ENCODE measurements at regions of chr22 and their contacts with region 1.

Region 1: DNA sequence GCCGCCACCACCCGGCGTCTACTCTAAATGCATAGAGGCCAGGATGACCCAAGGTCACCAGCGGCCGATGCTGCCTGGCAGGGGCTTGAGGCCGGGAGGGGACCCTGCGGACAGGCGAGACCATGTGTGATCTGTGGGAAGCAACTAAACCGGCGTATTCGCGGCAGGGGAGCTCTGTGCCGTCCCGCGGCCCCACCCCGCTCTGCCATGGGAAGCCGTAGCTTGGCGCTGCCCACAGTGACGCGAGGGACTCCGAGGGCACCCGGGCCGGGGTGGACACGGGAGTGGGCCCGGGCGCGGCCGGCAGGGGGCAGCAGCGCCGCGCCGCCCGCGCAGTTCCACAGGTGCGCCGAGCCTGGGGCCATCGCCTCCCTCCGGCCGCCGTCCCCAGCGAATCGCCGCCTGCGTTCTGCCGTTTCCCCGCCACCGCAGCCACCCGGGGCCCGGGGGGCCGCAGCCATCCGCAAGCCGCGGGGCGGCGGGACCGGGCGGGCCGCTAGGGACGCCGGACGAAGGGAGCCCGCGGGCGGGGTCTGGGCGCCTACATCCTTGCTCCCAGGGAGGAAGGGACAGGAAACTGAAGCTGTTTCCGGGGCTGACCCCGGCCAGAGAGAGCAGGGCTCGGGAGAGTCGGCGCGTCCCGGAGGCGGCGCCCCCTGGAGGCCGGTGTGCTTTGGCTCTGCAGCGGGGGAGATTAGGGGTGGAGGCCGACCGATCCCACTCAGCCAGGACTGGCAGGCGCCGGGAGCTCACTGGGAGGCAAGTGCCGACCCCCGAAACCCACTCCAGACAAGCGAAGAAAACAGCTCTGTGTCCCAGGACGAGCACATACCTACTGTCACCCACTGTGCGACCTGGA is 12.5 kb upstream of the HDHD5 start:
- DNase-seq: peak; percentile 94
- CTCF ChIP-seq: peak; percentile 91

Region 2: DNA sequence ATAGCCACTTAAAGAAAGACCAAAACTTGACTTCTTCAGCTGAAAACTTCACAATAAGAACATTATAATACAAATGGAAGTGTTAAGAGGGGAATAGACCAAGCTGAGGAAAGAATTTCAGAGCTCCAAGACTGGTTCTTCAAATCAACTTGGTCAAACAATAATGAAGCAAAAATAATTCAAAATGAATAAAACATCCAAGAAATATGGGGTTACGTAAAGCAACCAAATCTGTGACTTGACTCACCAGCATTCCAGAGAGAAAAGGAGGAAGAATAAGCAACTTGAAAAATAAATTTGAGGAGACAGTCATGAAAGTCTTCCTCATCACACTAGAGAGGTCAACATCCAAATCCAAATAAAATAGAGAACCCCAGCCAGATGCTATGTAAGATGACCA is 377.7 kb before region 1 on chr22:
- CTCF ChIA-PET with region 1: no interaction called
- POLR2A ChIA-PET with region 1: no interaction called
- DNase-seq: no peak
- CTCF ChIP-seq: no peak

Region 3: DNA sequence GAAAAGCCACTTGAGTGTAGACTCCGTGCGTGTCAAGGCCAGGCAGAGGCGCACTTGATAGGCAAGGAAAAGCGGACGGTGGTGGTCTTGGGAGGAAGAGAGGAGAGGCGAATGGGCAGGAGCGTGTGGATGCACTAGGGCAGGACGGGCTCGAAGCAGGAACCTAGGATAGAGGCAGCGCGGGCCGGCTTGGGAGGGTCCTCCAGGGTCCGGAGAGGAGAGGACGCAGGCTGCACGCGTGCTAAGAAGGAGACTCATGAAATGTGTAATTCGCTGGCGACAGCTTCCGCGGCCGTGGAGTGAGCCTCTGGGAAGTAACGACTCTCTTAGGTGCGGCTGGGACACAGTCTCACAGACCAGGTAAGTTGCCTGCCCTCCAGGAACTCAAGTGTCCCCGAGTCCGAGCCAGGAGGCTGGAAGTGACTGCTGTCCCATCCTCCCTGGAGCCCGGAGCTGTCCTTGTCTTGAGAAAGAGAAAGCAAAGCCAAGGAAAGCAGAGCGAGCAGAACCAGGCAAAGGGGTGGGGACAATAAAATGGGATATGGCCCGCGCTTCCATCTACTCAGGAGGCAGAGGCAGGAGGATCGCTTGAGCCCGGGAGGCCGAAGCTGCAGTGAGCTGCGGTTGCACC is 87.6 kb before region 1 on chr22:
- CTCF ChIA-PET with region 1: interaction called, 57 read pairs
- POLR2A ChIA-PET with region 1: no interaction called
- DNase-seq: no peak
- CTCF ChIP-seq: no peak

Region 4: GRCh38 chr22:17149076-17149810 is 22.3 kb before region 1 on chr22:
- CTCF ChIA-PET with region 1: interaction called, 137 read pairs
- POLR2A ChIA-PET with region 1: no interaction called
- DNase-seq: no peak
- CTCF ChIP-seq: no peak

Region 5: DNA sequence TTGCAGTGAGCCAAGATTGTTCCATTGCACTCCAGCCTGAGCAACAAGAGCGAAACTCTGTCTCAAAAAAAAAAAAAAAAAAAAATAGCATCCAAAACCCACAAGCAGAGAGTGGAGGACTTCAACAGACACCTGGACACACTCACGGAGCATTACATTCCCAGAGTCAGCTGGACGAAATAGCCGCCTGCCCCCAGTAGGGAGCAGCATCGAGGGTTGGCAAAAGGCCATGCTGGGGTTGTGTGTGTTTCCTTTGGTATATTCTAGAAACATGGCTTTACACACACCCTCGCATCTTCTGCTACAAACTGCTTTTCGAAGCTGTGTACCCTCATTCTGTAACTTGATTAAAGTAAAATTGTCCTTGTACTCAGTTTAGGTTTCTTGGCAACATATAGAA is 42.4 kb after region 1 on chr22:
- CTCF ChIA-PET with region 1: interaction called, 33 read pairs
- POLR2A ChIA-PET with region 1: no interaction called
- DNase-seq: no peak
- CTCF ChIP-seq: peak; percentile 35

Region 6: GRCh38 chr22:17272511-17272991 is 101.0 kb after region 1 on chr22:
- CTCF ChIA-PET with region 1: interaction called, 11 read pairs
- POLR2A ChIA-PET with region 1: no interaction called
- DNase-seq: no peak
- CTCF ChIP-seq: no peak

Region 7: GRCh38 chr22:17412232-17412631 is 240.7 kb after region 1 on chr22:
- CTCF ChIA-PET with region 1: no interaction called
- POLR2A ChIA-PET with region 1: no interaction called
- DNase-seq: no peak
- CTCF ChIP-seq: no peak

Region 8: DNA sequence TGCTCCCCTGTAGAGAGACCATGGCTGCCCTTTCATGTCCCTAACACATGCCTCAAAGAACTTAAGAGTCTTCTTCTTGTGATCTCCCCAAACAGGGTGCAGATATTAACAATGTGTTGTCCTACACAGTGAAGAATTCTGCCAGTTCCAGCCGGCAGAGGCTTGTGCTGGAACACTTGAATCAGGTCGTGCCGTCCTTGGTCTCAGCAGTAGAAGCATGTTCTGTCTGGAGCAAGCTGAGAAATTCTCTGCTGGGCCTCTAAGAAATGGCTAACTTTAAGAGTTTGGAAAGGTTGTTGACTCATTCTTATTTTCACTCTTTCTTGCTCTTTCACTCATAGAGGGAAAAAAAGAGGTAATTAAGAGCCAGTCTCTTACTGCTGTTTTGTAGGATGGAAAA is 320.7 kb after region 1 on chr22:
- CTCF ChIA-PET with region 1: interaction called, 28 read pairs
- POLR2A ChIA-PET with region 1: no interaction called
- DNase-seq: no peak
- CTCF ChIP-seq: no peak